Colonic mucosa (tissue), 4 donors: ENCODE measurements at regions of chr17 and their contacts with region 1.

Region 1: DNA sequence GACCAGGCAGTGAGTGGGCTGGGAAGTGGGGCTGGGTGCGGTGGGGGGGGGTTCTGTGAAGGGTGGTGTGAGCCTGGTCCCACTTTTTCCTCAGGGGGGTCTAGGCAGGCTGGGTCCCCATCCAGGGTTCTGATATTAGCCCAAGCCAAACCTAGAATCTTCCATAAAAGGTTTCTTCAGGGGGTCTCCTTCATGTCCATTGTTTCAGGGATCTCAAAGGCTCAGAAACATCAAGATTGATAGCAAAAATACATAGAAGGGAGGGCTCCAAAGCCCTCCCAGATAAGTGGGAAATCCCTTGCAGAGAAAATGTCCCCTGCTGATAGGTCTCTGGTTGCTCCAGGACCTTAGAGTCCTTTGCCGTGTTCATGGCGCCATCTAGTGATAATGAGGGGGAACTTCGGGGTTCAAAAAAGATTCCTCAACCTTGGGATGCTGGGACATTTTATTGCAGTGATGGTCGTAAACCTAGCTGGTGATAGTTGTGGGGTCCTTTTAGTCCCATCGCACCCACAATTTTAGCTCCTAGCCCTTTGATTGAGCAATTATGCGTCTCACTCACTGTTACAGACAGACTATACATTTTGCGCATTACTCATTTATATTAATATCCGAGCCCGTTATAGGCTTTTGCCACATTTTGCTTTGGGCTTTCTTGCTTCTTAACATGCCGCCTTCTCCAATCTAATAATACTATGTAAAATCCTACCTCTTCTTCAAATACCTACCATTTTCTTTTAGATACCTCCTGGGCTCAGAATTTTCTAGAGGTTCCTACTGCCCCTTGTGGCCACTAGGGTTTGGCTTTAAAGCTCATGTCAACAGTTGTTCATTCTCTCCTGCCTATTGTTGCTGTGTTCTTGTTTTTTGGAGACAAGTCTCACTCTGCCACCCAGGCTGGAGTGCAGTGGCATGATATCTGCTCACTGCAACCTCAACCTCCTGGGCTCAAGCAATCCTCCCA is 35.1 kb downstream of the IGF2BP1 start:
- DNase-seq: peak; percentile 62
- H3K4me3 ChIP-seq: no peak overlapping the region
- H3K27ac ChIP-seq: no peak overlapping the region
- H3K4me1 ChIP-seq: no peaks in the 10 kb centered on the region
- H3K27me3 ChIP-seq: no peaks in the 10 kb centered on the region
- CTCF ChIP-seq: peak; percentile 72

Region 2: DNA sequence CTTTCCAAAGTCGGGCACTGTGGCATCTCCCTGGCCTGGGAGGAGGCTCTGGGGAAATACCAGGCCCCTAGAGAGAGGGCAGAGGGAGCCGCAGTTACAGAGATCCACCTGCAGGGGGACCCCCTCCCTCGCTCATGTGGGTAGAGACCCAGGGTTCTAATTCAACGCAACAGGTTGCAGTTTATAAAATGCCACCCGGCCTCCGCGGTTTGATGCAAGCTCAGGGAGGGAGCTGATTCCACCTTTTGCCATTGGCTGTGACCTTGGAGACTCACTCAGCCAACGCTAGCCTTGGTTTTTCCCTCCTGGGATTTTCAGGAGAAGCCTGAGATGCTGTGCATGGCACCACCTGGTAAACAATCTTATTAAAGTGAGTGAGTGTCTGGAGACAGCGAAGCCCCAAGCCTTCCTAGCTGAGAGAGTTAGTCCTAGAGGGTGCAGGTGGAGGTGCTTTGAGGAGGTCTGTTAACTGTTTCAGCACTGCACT is 227.3 kb before region 1 on chr17:
- intact Hi-C with region 1: loop called (anchors 10 kb)
- DNase-seq: peak; percentile 91
- H3K4me3 ChIP-seq: no peak overlapping the region
- H3K27ac ChIP-seq: no peak overlapping the region
- H3K4me1 ChIP-seq: peaks cover 15% of the 10 kb centered on the region
- H3K27me3 ChIP-seq: no peaks in the 10 kb centered on the region
- CTCF ChIP-seq: peak; percentile 92

Region 3: DNA sequence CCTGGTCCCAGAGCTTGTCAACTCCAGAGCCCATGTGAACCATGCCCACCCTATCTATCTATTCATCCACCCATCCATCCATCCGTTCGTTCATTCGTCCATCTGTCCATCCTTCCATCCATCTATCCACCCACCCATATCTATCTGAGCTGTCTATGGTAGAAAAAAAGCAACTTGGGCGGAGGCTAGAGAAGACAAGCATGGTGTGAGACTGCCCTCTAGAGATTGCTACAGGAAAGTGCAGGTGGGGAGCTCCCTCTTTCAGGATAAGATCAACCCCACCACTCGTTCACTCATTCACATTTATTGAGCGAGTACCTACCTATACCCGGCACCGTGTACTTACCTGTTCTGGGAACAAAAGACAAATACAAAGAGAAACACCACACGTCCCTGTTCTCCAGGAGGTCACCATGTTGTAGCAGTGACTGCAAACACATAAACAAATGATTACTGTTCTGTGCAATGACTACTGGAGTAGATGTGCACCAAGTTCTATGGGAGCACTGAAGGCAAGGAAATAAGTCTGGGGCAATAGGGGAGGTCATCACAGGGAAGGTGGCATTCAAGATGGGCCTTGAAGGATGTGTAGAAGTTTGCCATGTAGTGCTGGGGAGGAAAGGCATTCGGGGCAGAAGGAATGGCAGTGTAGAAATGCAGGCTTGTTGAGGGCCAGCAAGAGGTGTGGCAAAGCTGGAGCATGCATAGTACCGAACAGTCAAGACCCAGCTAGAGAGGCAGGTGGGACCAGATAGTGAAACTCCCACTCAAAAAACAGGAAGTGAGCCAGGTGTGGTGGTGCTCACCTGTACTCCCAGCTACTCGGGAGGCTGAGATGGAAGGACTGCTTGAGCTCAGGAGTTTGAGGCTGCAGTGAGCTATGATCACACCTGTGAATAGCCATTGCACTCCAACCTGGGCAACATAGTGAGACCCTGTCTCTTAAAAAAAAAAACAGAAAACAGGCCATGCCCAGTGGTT is 153.0 kb before region 1 on chr17:
- intact Hi-C with region 1: loop called (anchors 2 kb)
- DNase-seq: peak; percentile 73
- H3K4me3 ChIP-seq: no peak overlapping the region
- H3K27ac ChIP-seq: no peak overlapping the region
- H3K4me1 ChIP-seq: no peaks in the 10 kb centered on the region
- H3K27me3 ChIP-seq: no peaks in the 10 kb centered on the region
- CTCF ChIP-seq: peak; percentile 92